ENCODE measurements at regions of chr19 and their contacts with region 1.

Region 1: DNA sequence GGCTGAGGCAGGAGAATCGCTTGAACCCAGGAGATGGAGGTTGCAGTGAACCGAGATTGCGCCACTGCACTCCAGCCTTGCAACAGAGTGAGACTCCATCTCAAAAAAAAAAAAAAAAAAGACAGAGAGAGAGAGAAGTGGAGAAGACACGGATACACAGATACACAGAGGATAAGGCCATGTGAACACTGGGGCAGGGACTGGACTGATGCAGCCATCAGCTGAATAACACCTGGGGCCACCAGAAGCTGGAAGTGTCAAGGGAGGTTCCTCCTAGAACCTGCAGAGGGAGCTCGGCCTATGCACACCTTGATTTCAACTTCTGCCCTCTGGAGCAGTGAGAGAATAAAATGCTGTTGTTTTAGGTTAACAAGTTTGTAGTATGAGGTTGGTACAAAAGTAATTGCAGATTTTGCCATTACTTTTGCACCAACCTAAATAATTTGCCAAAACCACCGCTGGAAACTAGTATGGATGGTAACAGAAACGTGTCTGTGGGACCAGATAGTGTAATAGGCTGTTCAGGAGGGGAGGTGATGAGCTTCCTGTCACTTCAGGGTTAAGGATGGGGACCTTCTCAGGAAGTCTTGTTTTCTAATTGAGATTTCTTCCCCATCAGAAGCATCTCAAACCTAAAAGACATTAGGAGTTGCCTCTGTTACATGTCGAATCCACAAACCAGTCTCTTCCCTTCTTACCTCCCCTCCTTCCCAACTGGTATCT is 36.4 kb upstream of the IGSF23 start:
- DNase-seq: peak; percentile 43
- H3K4me3 ChIP-seq: no peak overlapping the region
- H3K27ac ChIP-seq: no peak overlapping the region
- H3K4me1 ChIP-seq: no peaks in the 10 kb centered on the region
- H3K27me3 ChIP-seq: no peaks in the 10 kb centered on the region
- CTCF ChIP-seq: peak; percentile 38 to 68
- POLR2A ChIP-seq: no peak

Region 2: DNA sequence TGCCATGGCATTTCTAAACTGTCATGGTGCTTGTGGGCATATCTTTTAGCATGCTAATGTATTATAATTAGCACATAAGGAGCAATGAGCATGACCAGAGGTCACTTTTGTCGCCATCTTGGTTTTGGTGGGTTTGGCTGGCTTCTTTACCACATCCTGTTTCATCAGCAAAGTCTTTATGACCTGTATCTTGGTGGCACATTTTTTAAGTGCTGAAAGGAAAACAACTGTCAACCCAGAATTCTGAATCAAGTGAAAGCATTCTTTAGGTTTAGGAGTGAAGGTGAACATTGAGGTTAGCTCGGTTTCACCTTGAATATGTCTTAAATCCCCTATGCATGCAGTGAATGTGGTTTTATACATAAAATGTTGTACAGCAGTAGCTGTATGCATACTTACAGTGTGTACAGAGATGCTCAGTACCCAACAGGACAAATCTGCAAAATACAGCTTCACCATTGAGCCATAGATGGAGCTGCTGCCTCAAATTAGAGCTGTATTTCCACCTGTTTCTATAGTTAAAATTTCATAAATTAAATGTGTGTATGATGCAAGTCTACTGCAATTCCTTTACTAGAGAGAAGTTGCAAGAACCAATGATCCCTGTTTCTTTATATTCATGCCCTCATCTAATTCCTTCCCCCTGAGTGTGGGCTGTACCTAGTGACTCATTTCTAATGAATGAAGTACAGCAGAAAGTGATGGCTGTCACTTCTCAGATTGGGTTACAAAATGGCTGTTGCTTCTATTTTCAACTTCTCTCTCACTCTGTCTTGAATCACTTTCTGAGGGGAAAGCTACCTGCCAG is 11.2 kb after region 1 on chr19:
- CTCF ChIA-PET with region 1: interaction called, 60 read pairs
- POLR2A ChIA-PET with region 1: interaction called, 4 read pairs
- dilution Hi-C with region 1: no loop called
- intact Hi-C with region 1: no loop called
- DNase-seq: peak; percentile 77
- H3K4me3 ChIP-seq: peak overlapping the region in 1 of 3 experiments; percentile 1
- H3K27ac ChIP-seq: peak overlapping the region; percentile 93
- H3K4me1 ChIP-seq: peaks cover 55% of the 10 kb centered on the region
- H3K27me3 ChIP-seq: no peaks in the 10 kb centered on the region
- CTCF ChIP-seq: peak in 1 of 2 donors; percentile 12
- POLR2A ChIP-seq: no peak

Region 3: GRCh38 chr19:44741841-44742352 is 164.9 kb after region 1 on chr19:
- CTCF ChIA-PET with region 1: no interaction called
- POLR2A ChIA-PET with region 1: no interaction called
- dilution Hi-C with region 1: no loop called
- intact Hi-C with region 1: no loop called
- DNase-seq: peak; percentile 98
- H3K4me3 ChIP-seq: no peak overlapping the region
- H3K27ac ChIP-seq: peak overlapping the region; percentile 96
- H3K4me1 ChIP-seq: peaks cover 25% of the 10 kb centered on the region
- H3K27me3 ChIP-seq: no peaks in the 10 kb centered on the region
- CTCF ChIP-seq: no peak
- POLR2A ChIP-seq: peak; percentile 83